Thyroid gland (tissue), 4 donors: ENCODE measurements at regions of chr2 and their contacts with region 1.

Region 1: GRCh38 chr2:211161236-211161635 is 604.8 kb downstream of the CPS1 start:
- DNase-seq: no peak
- H3K4me3 ChIP-seq: no peak overlapping the region
- H3K27ac ChIP-seq: no peak overlapping the region
- H3K4me1 ChIP-seq: no peaks in the 10 kb centered on the region
- H3K27me3 ChIP-seq: no peaks in the 10 kb centered on the region
- CTCF ChIP-seq: no peak
- POLR2A ChIP-seq: no peak

Region 2: GRCh38 chr2:210873631-210874030 is 287.6 kb before region 1 on chr2:
- intact Hi-C with region 1: no loop called
- DNase-seq: no peak
- H3K4me3 ChIP-seq: no peak overlapping the region
- H3K27ac ChIP-seq: no peak overlapping the region
- H3K4me1 ChIP-seq: no peaks in the 10 kb centered on the region
- H3K27me3 ChIP-seq: no peaks in the 10 kb centered on the region
- CTCF ChIP-seq: no peak
- POLR2A ChIP-seq: no peak

Region 3: GRCh38 chr2:211084352-211084751 is 76.9 kb before region 1 on chr2:
- intact Hi-C with region 1: loop called (anchors 5 kb)
- DNase-seq: no peak
- H3K4me3 ChIP-seq: no peak overlapping the region
- H3K27ac ChIP-seq: no peak overlapping the region
- H3K4me1 ChIP-seq: no peaks in the 10 kb centered on the region
- H3K27me3 ChIP-seq: no peaks in the 10 kb centered on the region
- CTCF ChIP-seq: no peak
- POLR2A ChIP-seq: no peak

Region 4: GRCh38 chr2:211216221-211216620 is 55.0 kb after region 1 on chr2:
- intact Hi-C with region 1: no loop called
- DNase-seq: no peak
- H3K4me3 ChIP-seq: no peak overlapping the region
- H3K27ac ChIP-seq: no peak overlapping the region
- H3K4me1 ChIP-seq: no peaks in the 10 kb centered on the region
- H3K27me3 ChIP-seq: no peaks in the 10 kb centered on the region
- CTCF ChIP-seq: peak in 4 of 6 experiments; percentile 15 to 41 (median 31)
- POLR2A ChIP-seq: no peak